ENCODE measurements at regions of chr18 and their contacts with region 1.

Region 1: GRCh38 chr18:50266248-50266704 is at the start of gene CFAP53:
- DNase-seq: peak; percentile 90
- H3K4me3 Mint-ChIP-seq: peak within 1 kb of the TSS; percentile 76
- H3K27ac Mint-ChIP-seq: no peak within 1 kb of the TSS
- H3K4me1 Mint-ChIP-seq: peaks cover 16% of the 10 kb centered on the region
- H3K27me3 Mint-ChIP-seq: no peaks in the 10 kb centered on the region
- total RNA-seq, gene CFAP53: 0.40 to 0.43 TPM

Region 2: GRCh38 chr18:49459404-49460171 is 806.7 kb before region 1 on chr18:
- CTCF ChIA-PET with region 1: no interaction called
- intact Hi-C with region 1: loop called (anchors 1 kb)
- DNase-seq: peak; percentile 46
- H3K4me3 Mint-ChIP-seq: peak overlapping the region; percentile 89
- H3K27ac Mint-ChIP-seq: no peak overlapping the region
- H3K4me1 Mint-ChIP-seq: peaks cover 45% of the 10 kb centered on the region
- H3K27me3 Mint-ChIP-seq: no peaks in the 10 kb centered on the region

Region 3: DNA sequence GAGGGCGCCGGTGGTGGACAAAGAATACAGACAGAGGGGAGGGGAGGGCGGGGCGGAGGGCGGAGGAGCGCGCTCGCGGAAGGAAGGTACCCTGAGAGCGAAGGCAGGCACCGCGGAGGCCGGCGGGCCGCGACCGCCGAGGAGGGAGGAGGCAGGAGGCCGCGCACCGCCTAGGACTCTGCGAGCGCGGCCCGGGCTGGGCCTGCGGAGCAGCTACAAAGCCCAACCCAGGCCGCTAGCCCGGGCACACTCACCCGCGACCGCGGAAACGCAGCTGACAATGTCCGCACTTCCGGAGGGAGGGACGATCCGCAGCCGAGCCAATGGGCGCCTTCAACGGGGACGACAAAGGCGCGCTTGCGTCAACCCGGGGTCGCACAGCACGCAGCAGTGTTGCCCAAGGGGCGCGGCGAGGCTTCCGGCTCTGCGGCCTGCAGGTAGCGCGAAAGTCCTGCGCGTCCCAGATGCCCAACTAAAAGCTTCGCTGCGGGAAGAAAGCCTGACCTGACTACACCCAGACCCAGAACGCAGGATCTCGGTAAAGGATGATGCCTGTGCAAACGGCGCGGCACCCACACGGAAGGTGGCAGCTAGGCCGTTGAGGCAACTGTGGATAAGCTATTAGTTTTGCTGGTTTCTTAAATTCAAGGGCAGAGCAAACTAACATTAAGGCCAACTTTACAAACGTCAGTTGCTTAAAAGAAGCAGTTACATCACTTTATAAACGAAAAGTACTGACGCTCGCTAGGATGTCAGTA is 779.1 kb before region 1 on chr18 and contains the start of gene C18orf32:
- CTCF ChIA-PET with region 1: no interaction called
- intact Hi-C with region 1: loop called (anchors 5 kb)
- DNase-seq: peak; percentile 94
- H3K4me3 Mint-ChIP-seq: peak within 1 kb of the TSS; percentile 94
- H3K27ac Mint-ChIP-seq: peak within 1 kb of the TSS; percentile 94
- H3K4me1 Mint-ChIP-seq: peaks cover 63% of the 10 kb centered on the region
- H3K27me3 Mint-ChIP-seq: no peaks in the 10 kb centered on the region
- total RNA-seq, gene C18orf32: 24.1 to 26.6 TPM

Region 4: DNA sequence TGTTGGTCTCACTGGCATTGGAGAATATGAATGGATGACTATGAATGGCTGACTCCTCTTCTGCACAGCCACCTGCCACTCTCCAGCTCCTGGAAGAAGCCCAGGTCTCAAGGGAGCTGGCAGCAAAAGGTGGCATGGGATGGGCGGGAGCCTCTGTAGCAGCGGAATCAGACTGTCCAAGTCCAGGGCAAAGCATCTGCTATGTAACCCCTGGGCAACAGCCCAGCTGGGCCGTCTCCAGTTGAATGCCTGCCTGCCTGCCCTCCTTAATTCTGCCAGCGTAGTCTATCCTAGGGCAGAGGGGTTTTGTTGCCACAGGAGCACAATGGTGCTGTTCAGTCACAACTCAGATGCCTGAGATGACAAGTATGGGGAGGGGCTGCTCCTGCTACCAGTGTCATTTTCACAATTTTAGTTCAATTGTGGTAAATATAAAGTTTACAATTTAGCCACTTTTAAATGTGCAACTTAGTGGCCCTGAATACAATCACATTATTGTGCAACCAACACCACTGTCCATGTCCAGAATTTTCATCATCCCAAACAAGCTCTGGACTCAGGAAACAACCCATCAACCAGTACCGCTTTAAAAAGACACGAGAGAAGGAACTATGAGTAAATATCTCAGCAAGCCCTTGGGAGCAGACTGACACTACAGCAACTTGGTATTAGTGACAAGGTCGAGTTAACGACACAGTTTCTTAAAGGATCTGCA is 186.5 kb before region 1 on chr18:
- CTCF ChIA-PET with region 1: no interaction called
- intact Hi-C with region 1: no loop called
- DNase-seq: no peak
- H3K4me3 Mint-ChIP-seq: no peak overlapping the region
- H3K27ac Mint-ChIP-seq: no peak overlapping the region
- H3K4me1 Mint-ChIP-seq: peaks cover 4% of the 10 kb centered on the region
- H3K27me3 Mint-ChIP-seq: peaks cover 12% of the 10 kb centered on the region

Region 5: DNA sequence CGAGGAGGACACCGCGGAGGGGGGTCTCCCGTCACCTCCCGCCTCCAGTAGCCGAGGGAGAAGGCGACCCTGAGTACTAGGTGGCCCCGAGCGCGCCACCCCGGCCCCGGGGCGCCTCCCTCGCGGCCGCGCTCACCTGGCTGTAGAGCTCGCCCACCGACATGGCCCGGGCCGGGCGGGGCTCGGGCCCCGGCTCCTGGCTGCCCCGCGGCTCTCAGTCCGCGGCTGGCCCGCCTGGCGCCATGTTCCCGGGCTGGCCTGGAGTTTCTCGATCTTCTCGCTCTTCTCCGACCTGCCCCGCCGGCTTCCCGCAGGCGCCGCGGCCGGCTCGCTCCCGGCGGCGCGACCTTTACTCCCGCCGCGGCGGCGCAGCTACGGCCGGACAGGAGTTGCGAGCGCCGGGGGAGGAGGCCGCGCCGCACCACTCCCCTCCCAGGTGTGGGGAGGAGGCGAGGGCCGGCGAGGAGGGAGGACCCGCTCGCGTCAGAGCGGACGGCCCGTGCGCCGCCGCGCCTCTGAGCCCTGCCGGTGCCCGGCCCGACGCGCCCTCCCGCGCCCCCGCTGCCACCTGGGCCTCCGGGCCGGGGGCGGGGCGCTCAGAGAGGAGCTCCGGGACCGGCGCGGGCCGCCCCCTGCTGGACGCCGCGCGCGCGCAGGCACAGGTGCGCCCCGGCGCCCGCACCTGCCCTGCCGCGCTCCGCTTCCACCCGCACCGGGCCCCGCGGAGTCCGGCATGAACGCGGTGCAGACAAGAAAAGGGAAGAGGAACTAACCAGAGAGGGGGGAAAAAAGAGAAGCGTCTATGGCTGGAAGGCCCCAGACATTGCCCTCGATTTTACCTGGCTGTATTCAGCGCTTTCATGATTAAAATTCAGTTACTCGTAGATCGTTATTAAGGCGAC is 71.4 kb before region 1 on chr18 and contains the start of gene MYO5B:
- CTCF ChIA-PET with region 1: no interaction called
- intact Hi-C with region 1: no loop called
- DNase-seq: peak; percentile 53
- H3K4me3 Mint-ChIP-seq: peak within 1 kb of the TSS; percentile 57
- H3K27ac Mint-ChIP-seq: no peak within 1 kb of the TSS
- H3K4me1 Mint-ChIP-seq: peaks cover 13% of the 10 kb centered on the region
- H3K27me3 Mint-ChIP-seq: peaks cover 51% of the 10 kb centered on the region
- total RNA-seq, gene MYO5B: 0.02 to 0.12 TPM

Region 6: DNA sequence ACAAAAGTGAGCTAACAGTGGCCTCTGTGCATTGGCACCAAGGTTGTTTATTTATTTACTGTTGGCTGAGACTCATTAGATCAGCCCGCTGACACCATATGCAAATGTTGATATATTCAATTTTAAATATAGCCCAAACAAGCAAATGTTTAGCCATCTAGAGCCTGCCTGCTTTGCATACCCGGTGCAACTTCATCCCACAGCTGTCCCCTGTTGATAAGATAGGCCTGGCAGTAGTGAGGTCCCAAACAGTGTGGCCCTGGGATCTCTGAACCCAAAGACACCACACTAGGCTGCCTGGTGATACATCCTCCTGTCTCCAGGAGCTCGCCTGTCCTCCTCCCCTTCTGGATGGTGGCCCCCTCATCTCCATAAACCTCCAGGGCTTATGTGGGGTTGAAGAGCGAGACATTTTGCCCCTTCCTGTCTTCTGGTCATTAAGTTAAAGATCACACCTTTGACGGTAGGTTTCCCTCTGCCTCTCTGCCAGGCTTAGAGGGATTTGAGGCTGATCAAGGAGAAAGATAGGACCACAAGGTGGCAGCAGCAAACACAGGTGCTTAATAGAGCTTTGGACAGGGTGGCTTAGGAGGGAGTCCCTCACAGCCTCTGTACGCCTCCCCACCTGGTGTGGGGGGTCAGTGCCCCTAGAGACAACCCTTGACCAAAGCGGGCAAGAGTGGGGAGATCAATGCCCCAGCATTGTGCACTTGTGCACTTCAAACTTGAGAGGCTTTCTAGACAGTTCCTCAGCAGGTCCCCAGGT is 47.7 kb before region 1 on chr18:
- CTCF ChIA-PET with region 1: interaction called, 7 read pairs
- intact Hi-C with region 1: loop called (anchors 1 kb)
- DNase-seq: peak; percentile 59
- H3K4me3 Mint-ChIP-seq: no peak overlapping the region
- H3K27ac Mint-ChIP-seq: no peak overlapping the region
- H3K4me1 Mint-ChIP-seq: no peaks in the 10 kb centered on the region
- H3K27me3 Mint-ChIP-seq: peaks cover 18% of the 10 kb centered on the region

Region 7: GRCh38 chr18:50281295-50281971 is 15.2 kb after region 1 on chr18 and contains the start of gene MBD1:
- CTCF ChIA-PET with region 1: interaction called, 7 read pairs
- intact Hi-C with region 1: loop called (anchors 1 kb)
- DNase-seq: peak; percentile 96
- H3K4me3 Mint-ChIP-seq: peak within 1 kb of the TSS; percentile 97
- H3K27ac Mint-ChIP-seq: peak within 1 kb of the TSS; percentile 84
- H3K4me1 Mint-ChIP-seq: peaks cover 36% of the 10 kb centered on the region
- H3K27me3 Mint-ChIP-seq: no peaks in the 10 kb centered on the region
- total RNA-seq, gene MBD1: 66.4 to 69.0 TPM

Region 8: GRCh38 chr18:50374753-50375391 is 108.6 kb after region 1 on chr18 and contains the start of gene SKA1:
- CTCF ChIA-PET with region 1: interaction called, 3 read pairs
- intact Hi-C with region 1: loop called (anchors 1 kb)
- DNase-seq: peak; percentile 95
- H3K4me3 Mint-ChIP-seq: peak within 1 kb of the TSS; percentile 88
- H3K27ac Mint-ChIP-seq: peak within 1 kb of the TSS; percentile 87
- H3K4me1 Mint-ChIP-seq: peaks cover 2% of the 10 kb centered on the region
- H3K27me3 Mint-ChIP-seq: peaks cover 5% of the 10 kb centered on the region
- total RNA-seq, gene SKA1: 36.1 to 36.3 TPM